Prostate gland (tissue), 2 donors: ENCODE measurements at regions of chr21 and their contacts with region 1.

Region 1: GRCh38 chr21:15894596-15894995 is 164.8 kb downstream of the USP25 start:
- DNase-seq: no peak
- H3K4me3 ChIP-seq: no peak overlapping the region
- H3K27ac ChIP-seq: no peak overlapping the region
- H3K4me1 ChIP-seq: no peaks in the 10 kb centered on the region
- H3K27me3 ChIP-seq: no peaks in the 10 kb centered on the region
- CTCF ChIP-seq: peak in 3 of 4 experiments; percentile 40 to 58 (median 54)
- POLR2A ChIP-seq: no peak

Region 2: DNA sequence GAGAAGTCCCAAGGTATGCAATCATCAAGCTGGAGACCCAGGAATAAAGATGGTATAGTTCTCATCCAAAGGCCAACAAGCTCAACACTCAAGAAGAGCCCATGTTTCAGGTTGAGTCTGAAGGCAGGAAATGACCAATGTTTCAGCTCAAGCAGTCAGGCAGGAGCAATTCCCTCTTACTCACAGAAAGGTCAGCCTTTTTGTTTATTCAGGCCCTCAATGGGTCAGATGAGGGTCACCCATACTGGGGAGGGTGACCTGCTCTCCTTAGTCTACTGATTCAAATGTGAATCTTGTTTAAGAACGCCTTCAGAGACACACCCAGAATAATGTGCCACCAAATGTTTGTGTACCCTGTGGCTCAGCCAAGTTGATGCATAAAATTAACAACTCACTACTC is 97.6 kb after region 1 on chr21:
- intact Hi-C with region 1: loop called (anchors 10 kb)
- DNase-seq: no peak
- H3K4me3 ChIP-seq: no peak overlapping the region
- H3K27ac ChIP-seq: no peak overlapping the region
- H3K4me1 ChIP-seq: no peaks in the 10 kb centered on the region
- H3K27me3 ChIP-seq: no peaks in the 10 kb centered on the region
- CTCF ChIP-seq: no peak
- POLR2A ChIP-seq: no peak

Region 3: GRCh38 chr21:16071092-16071491 is 176.5 kb after region 1 on chr21:
- intact Hi-C with region 1: loop called (anchors 10 kb)
- DNase-seq: peak; percentile 32
- H3K4me3 ChIP-seq: peak overlapping the region; percentile 29 to 36
- H3K27ac ChIP-seq: peak overlapping the region; percentile 63 to 69
- H3K4me1 ChIP-seq: no peaks in the 10 kb centered on the region
- H3K27me3 ChIP-seq: no peaks in the 10 kb centered on the region
- CTCF ChIP-seq: no peak
- POLR2A ChIP-seq: no peak

Region 4: GRCh38 chr21:16330082-16330907 is 435.7 kb after region 1 on chr21:
- intact Hi-C with region 1: loop called (anchors 10 kb)
- DNase-seq: peak; percentile 67
- H3K4me3 ChIP-seq: no peak overlapping the region
- H3K27ac ChIP-seq: peak overlapping the region in 1 of 2 donors; percentile 37
- H3K4me1 ChIP-seq: no peaks in the 10 kb centered on the region
- H3K27me3 ChIP-seq: no peaks in the 10 kb centered on the region
- CTCF ChIP-seq: peak; percentile 45 to 80 (median 75)
- POLR2A ChIP-seq: no peak

Region 5: DNA sequence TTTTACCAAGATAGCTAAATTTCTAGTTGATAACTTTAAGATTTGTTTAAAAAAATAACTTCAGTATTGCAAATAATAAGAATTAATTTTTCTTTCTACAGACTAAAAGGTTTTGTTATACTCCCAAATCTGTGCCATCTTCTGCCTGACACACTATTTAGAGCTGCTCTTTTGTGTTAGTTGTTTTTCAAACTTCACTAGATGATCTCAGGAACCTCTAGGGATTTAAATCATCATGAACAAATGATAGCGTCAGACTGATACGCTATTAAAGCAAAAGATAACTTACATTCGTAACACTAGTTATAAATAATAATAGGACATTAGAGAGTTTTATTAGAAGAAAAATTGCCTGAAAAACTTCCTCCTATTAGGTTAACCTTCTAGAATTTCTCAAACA is 1375.2 kb after region 1 on chr21:
- intact Hi-C with region 1: loop called (anchors 10 kb)
- DNase-seq: no peak
- H3K4me3 ChIP-seq: no peak overlapping the region
- H3K27ac ChIP-seq: no peak overlapping the region
- H3K4me1 ChIP-seq: no peaks in the 10 kb centered on the region
- H3K27me3 ChIP-seq: no peaks in the 10 kb centered on the region
- CTCF ChIP-seq: no peak
- POLR2A ChIP-seq: no peak